Activated CD4-positive, alpha-beta T cell treated with anti-CD3 and anti-CD28 coated beads, Interleukin-2, amount 10 ng/mL, durations not matched to agents 7 days and 5 days (primary cell): ENCODE measurements at regions of chr6 and their contacts with region 1.

Region 1: DNA sequence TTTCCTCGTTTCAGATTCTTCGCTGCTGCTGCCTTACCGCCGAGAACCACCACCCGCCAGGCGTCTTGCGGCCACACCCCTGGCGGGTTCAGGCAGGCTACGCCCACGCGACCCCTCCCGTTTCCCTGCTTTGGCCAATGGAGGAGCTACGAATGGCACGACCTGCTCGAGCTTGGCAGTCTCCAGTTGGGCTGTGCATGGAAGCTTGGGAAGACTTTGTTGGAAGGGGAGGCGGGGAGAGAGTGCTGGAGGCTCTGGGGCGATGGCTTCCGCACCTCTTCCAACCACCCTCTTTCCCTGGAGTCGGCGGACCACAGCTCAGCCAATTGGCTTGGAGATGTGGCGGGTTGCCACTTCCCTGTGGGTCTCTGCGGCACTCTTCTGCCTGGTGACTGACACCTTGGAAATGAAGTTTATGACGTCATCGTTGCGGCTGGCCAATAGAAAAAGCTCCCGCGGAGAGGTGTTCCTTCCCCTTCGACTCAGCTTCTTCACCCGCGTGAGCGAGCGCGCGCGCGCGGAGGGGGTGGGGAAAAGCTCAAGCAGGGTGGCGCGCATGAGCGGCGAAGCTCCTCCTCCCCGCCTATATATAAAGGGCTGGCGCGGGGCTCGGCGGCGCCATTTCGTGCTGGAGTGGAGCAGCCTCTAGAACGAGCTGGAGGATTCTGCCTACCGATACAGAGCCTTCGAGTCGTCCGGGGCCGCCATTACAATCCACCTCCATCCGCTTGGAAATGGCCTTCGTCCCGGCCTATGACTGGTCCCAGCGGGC is 3.4 kb downstream of the BRD2 start:
- DNase-seq: peak; percentile 100
- H3K4me3 Mint-ChIP-seq: peak overlapping the region; percentile 89
- H3K27ac Mint-ChIP-seq: peak overlapping the region; percentile 99
- H3K4me1 Mint-ChIP-seq: peaks cover 25% of the 10 kb centered on the region
- H3K27me3 Mint-ChIP-seq: no peaks in the 10 kb centered on the region

Region 2: DNA sequence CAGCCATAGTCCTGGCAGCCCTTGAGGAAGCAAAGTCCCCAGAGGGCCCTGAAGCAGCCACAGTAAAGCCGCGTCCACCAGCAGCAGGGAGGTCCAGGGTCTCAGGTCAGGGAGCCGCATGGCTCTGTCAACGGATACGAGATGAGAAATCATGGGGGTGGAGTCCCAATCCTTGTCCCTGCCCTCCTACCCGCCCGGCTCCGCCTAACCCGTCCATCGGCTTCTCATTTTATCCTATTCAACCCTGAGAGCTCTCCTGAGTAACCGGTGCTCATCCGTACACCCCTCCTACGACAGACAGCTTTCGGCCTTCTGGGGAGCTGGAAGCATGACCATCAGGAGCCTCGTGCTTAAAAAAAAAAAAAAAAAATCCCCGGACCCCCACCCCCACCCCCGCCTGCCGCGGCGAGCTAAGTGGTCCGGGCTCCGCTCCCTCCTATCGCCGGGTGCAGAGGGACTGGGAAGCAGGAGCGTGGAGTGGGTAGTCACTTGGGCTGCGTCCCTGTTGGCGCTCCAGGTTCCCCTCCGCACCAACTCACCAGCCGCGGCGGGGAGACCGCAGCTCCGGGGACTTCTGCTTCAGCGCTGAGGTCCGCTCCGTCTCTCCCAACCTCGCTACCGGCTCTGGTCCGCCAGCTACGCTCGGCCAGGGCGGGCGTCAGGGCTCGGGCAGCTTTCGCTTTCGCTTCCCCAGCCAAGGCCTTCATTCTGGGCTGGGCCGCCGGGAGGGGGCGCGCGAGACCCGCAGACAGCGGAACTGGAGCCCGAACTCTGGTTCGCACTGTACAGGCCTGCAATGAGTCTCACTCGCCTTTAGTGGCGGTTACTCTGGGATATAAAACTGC is 133.4 kb before region 1 on chr6 and contains the start of gene TAP2:
- CTCF ChIA-PET with region 1: interaction called, 59 read pairs
- POLR2A ChIA-PET with region 1: interaction called, 33 read pairs
- DNase-seq: peak; percentile 97
- H3K4me3 Mint-ChIP-seq: peak within 1 kb of the TSS; percentile 89
- H3K27ac Mint-ChIP-seq: peak within 1 kb of the TSS; percentile 100
- H3K4me1 Mint-ChIP-seq: peaks cover 84% of the 10 kb centered on the region
- H3K27me3 Mint-ChIP-seq: no peaks in the 10 kb centered on the region
- total RNA-seq, gene TAP2: 332 to 337 TPM

Region 3: GRCh38 chr6:32853541-32854375 is 118.0 kb before region 1 on chr6 and contains the starts of genes PSMB9 and TAP1:
- CTCF ChIA-PET with region 1: interaction called, 22 read pairs
- POLR2A ChIA-PET with region 1: interaction called, 17 read pairs
- DNase-seq: peak; percentile 97
- H3K4me3 Mint-ChIP-seq: peak within 1 kb of the TSS; percentile 98
- H3K27ac Mint-ChIP-seq: peak within 1 kb of the TSS; percentile 100
- H3K4me1 Mint-ChIP-seq: peaks cover 62% of the 10 kb centered on the region
- H3K27me3 Mint-ChIP-seq: no peaks in the 10 kb centered on the region
- total RNA-seq, gene PSMB9: 329 to 391 TPM
- total RNA-seq, gene TAP1: 396 to 441 TPM

Region 4: GRCh38 chr6:32933636-32934085 is 38.1 kb before region 1 on chr6:
- CTCF ChIA-PET with region 1: interaction called, 15 read pairs
- POLR2A ChIA-PET with region 1: interaction called, 7 read pairs
- DNase-seq: peak; percentile 81
- H3K4me3 Mint-ChIP-seq: no peak overlapping the region
- H3K27ac Mint-ChIP-seq: no peak overlapping the region
- H3K4me1 Mint-ChIP-seq: peaks cover 15% of the 10 kb centered on the region
- H3K27me3 Mint-ChIP-seq: peaks cover 18% of the 10 kb centered on the region

Region 5: DNA sequence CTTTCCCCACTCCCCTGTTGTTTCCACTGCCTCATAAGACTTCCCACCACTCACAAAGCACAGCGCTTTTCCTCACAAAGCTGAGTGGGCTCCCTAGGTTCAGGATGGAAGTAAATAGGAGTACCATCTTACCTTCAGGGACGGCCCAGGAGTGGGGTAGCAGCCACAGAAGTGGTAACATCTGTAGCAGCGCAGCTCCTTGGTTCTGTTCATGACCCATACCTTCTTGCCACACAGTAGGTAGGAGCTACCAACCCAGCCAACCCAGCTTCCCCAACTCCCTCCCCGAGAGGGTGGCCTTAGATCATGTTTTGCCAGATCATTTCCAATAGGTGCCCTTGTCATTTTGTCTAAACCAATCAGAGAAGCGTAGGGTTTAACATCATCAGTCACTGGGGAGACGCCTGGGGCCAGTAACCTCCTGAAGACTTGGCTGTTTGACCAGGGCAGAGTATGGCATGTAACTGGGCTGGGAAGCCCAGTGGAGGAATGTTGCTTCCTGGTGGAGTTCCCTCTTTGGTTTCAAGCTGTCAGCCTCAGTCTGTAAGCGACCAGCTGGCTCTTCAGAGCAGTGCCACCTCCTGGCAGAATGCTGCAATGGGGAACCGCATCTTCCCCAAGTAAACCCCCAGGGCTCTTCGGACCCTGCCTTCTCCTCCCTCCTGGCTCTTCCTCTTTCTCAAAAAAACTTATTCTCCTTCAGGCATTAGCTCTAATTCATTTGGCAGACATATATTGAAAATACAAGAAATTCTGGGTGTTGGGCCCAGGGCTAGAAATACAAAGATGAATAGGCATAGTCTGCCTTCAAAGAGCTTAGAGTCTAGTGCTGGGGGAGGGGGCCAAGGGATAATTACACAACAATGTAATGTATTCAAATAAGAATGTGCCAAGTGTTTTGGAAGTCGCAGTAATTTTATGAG is 18.7 kb before region 1 on chr6 and contains the start of gene HLA-DMA:
- CTCF ChIA-PET with region 1: interaction called, 156 read pairs
- POLR2A ChIA-PET with region 1: interaction called, 19 read pairs
- DNase-seq: peak; percentile 85
- H3K4me3 Mint-ChIP-seq: peak within 1 kb of the TSS; percentile 72
- H3K27ac Mint-ChIP-seq: peak within 1 kb of the TSS; percentile 82
- H3K4me1 Mint-ChIP-seq: peaks cover 54% of the 10 kb centered on the region
- H3K27me3 Mint-ChIP-seq: no peaks in the 10 kb centered on the region
- total RNA-seq, gene HLA-DMA: 24.0 to 26.8 TPM